Natural killer cell (primary cell): ENCODE measurements at regions of chr7 and their contacts with region 1.

Region 1: DNA sequence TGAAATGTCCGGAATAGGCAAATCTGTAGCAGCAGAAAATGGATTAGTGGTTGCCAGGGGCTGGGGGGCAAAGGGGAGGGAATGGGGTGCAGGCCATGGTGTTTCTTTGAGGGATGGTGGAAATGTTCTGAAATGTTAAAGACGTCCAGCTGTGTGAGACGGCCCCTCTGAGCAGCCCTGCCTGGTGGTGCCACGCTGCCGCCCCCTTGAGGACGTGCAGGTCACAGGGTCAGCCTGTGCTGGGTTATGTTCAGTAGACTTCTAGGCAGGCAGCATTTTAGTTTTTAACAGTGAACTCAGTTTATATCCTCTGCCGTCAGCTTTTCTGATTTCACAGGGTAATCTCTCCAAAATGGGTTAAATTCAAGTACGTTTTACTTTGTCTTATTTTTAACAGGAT is 9.4 kb downstream of the NUB1 start:
- DNase-seq: peak in 1 of 2 donors; percentile 55
- ATAC-seq: no peak
- H3K4me3 ChIP-seq: no peak overlapping the region
- H3K4me3 Mint-ChIP-seq: peak overlapping the region; percentile 81
- H3K27ac ChIP-seq: peak overlapping the region; percentile 99
- H3K27ac Mint-ChIP-seq: peak overlapping the region; percentile 98 to 100
- H3K4me1 ChIP-seq: peaks cover 37% of the 10 kb centered on the region
- H3K4me1 Mint-ChIP-seq: peaks cover 29 to 34% of the 10 kb centered on the region in 2 donors
- H3K27me3 ChIP-seq: no peaks in the 10 kb centered on the region
- H3K27me3 Mint-ChIP-seq: no peaks in the 10 kb centered on the region
- CTCF ChIP-seq: no peak

Region 2: DNA sequence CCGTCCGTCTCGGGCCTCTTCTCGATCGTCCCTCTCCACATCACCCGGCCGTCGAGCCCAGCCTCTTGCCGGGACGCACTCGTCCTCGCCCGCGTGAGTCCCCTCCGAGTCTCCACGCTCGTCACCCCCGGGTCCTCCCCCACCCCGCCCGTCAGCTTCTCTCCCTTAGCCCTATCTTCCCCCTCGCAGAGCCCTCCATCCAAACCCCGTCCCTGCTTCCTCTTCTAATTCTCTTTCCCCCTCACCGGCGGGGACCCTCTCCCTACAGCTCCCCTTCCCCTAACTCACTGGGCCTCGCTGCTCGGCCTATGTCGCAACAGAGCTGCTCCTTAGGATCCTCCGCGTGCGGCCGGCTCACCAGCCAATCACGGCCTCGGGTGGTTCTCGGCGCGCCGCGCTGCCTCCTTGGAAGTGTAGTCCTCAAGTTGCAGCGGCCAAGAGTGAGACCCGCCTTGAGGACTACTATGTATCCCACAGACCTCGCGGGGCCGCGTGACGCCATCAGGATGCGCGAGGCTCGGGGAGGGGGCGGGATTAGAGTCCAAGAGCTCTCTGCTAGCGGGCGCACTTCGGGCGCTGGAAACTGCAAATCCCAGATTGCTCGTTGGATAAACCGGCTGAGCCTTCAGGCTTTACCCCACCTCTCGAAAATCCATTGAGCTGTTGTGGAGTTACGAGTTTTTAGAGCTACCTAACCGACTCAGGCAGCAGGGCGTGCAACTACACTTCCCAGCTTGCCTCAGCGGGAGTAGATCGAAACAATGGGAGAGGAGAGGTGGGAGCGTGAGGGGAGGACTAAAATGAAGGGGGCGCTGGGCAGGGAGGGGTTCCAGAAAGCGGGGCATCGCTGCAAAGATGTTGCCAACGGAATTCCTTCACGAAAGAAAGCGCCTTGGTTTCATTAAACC is 123.9 kb before region 1 on chr7 and contains the start of gene ABCF2:
- intact Hi-C with region 1: loop called (anchors 1 kb)
- DNase-seq: peak; percentile 96 to 98
- ATAC-seq: peak; percentile 98 to 100 (median 99)
- H3K4me3 ChIP-seq: peak within 1 kb of the TSS; percentile 64
- H3K4me3 Mint-ChIP-seq: peak within 1 kb of the TSS; percentile 95
- H3K27ac ChIP-seq: peak within 1 kb of the TSS; percentile 61
- H3K27ac Mint-ChIP-seq: peak within 1 kb of the TSS; percentile 86 to 94
- H3K4me1 ChIP-seq: peaks cover 29% of the 10 kb centered on the region
- H3K4me1 Mint-ChIP-seq: peaks cover 29 to 36% of the 10 kb centered on the region in 2 donors
- H3K27me3 ChIP-seq: no peaks in the 10 kb centered on the region
- H3K27me3 Mint-ChIP-seq: no peaks in the 10 kb centered on the region
- CTCF ChIP-seq: no peak
- total RNA-seq, gene ABCF2: 12.1 to 26.1 (median 17.6) TPM

Region 3: GRCh38 chr7:151315038-151315655 is 35.9 kb before region 1 on chr7:
- intact Hi-C with region 1: loop called (anchors 1 kb)
- DNase-seq: peak; percentile 57 to 92
- ATAC-seq: peak; percentile 86 to 96 (median 95)
- H3K4me3 ChIP-seq: no peak overlapping the region
- H3K4me3 Mint-ChIP-seq: no peak overlapping the region
- H3K27ac ChIP-seq: no peak overlapping the region
- H3K27ac Mint-ChIP-seq: peak overlapping the region in 1 of 2 donors; percentile 58
- H3K4me1 ChIP-seq: peaks cover 4% of the 10 kb centered on the region
- H3K4me1 Mint-ChIP-seq: peaks cover 0 to 5% of the 10 kb centered on the region in 2 donors
- H3K27me3 ChIP-seq: no peaks in the 10 kb centered on the region
- H3K27me3 Mint-ChIP-seq: no peaks in the 10 kb centered on the region
- CTCF ChIP-seq: peak; percentile 89

Region 4: GRCh38 chr7:151631968-151632749 is 281.1 kb after region 1 on chr7:
- intact Hi-C with region 1: loop called (anchors 5 kb)
- DNase-seq: peak; percentile 90 to 94
- ATAC-seq: peak; percentile 78 to 89 (median 81)
- H3K4me3 ChIP-seq: peak overlapping the region; percentile 70
- H3K4me3 Mint-ChIP-seq: peak overlapping the region; percentile 99
- H3K27ac ChIP-seq: peak overlapping the region; percentile 79
- H3K27ac Mint-ChIP-seq: peak overlapping the region; percentile 93 to 96
- H3K4me1 ChIP-seq: peaks cover 10% of the 10 kb centered on the region
- H3K4me1 Mint-ChIP-seq: peaks cover 24 to 31% of the 10 kb centered on the region in 2 donors
- H3K27me3 ChIP-seq: no peaks in the 10 kb centered on the region
- H3K27me3 Mint-ChIP-seq: no peaks in the 10 kb centered on the region
- CTCF ChIP-seq: peak; percentile 51